KBM-7 (cell line): ENCODE measurements at regions of chrX and their contacts with region 1.

Region 1: GRCh38 chrX:43741843-43742573 is 85.9 kb downstream of the MAOA start:
- DNase-seq: peak; percentile 35

Region 2: DNA sequence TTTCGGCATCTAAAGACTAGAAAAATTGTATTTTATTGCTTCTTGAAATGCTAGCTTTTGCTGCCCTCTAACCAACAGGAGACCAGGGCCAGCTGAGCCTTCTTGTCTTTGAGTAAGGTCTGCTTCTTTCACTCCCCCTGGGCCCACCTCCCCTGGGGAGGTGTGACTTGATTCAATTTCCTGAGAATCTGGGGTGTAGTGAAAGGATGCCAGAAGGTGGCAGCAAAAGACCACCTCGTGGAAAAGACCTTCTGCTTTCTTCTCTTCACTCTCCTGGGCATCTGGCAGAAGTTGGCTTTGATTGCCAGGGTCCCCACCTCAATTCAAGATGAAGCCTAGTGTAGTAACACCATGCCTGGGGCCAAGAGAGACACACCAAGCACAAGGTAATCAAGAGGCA is 182.4 kb before region 1 on chrX:
- in situ Hi-C with region 1: loop called (anchors 10 kb)
- DNase-seq: peak; percentile 83

Region 3: DNA sequence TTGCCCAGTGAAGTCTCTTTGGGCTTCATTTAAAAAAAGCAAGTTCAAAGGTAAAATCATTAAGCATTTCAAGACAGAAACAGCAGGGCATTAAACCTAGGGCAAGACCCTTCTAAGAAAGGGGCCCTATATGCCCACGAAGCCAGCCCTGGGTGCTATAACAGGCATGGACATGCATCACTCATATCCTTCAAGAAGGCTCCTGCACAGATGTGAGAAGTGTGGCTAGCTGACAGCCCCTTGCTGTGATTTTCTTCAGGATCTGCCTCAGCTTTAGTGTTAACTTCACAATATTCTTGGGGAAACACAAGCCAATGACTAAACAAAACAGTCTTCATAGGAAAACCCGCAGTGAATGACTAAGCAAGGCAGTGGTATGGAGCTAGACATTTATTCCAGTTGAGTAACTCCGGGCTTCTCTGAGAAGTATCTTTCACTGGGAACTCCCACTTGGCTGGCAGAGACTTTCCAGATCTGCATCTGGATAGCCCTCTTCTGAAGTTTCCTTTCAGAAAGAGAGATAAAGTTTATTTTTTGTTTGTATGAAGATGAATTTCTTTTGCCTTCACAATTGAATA is 97.8 kb before region 1 on chrX:
- in situ Hi-C with region 1: no loop called
- DNase-seq: peak; percentile 74

Region 4: GRCh38 chrX:43809463-43809862 is 67.5 kb after region 1 on chrX:
- in situ Hi-C with region 1: no loop called
- DNase-seq: no peak

Region 5: DNA sequence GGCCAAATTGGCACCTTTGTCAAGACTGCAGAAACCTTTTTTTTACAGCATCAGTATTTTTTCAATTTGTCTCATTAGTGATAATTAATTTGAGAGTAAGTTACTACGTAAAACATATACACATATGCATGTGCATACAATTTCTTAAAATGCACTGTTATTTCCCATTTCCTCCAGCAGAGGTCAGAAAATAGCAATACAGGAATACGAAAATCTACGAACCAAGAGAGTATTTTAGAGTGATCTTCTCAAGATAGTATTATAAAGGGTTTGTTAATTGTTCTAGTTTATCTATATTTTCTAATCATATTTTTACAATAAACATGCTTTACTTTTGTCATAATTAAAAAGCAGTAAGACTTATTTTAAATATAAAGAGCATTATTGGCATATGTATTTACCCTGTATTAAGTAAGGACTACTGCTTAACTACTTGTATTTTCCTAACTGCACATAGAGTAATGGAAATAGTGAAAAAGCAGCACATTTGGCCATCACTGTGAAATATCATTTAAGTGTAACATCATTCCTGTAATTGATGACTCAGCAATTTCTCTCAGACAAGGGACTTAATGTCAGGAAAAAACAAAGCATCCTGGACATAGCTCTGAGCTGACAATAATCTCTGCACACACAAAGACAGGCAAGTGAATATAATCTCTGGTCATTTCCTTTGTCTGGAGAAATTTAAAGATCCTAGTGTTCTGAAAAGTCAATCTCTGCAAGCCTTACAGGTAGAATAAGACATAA is 94.6 kb after region 1 on chrX:
- in situ Hi-C with region 1: no loop called
- DNase-seq: peak; percentile 42

Region 6: GRCh38 chrX:43969504-43970501 is 227.8 kb after region 1 on chrX:
- in situ Hi-C with region 1: no loop called
- DNase-seq: no peak